HCT116 (cell line): ENCODE measurements at regions of chr2 and their contacts with region 1.

Region 1: GRCh38 chr2:208033758-208034502 is 8.6 kb upstream of the PLEKHM3 start:
- DNase-seq: peak; percentile 68
- ATAC-seq: peak; percentile 92
- H3K4me3 ChIP-seq: no peak overlapping the region
- H3K27ac ChIP-seq: no peak overlapping the region
- H3K4me1 ChIP-seq: peaks cover 0 to 7% of the 10 kb centered on the region in 2 experiments; a peak in 2 of 4 replicates
- H3K27me3 ChIP-seq: no peaks in the 10 kb centered on the region
- CTCF ChIP-seq: peak; percentile 40 to 75 (median 54); a peak in 5 of 6 replicates
- POLR2A ChIP-seq: no peak
- RAD21 ChIP-seq: peak; percentile 87

Region 2: GRCh38 chr2:207352978-207353671 is 680.8 kb before region 1 on chr2:
- CTCF ChIA-PET with region 1: no interaction called
- POLR2A ChIA-PET with region 1: no interaction called
- RAD21 ChIA-PET with region 1: no interaction called
- intact Hi-C with region 1: no loop called
- DNase-seq: no peak
- ATAC-seq: peak; percentile 74
- H3K4me3 ChIP-seq: no peak overlapping the region
- H3K27ac ChIP-seq: no peak overlapping the region
- H3K4me1 ChIP-seq: peaks cover 0 to 4% of the 10 kb centered on the region in 2 experiments; a peak in 1 of 4 replicates
- H3K27me3 ChIP-seq: no peaks in the 10 kb centered on the region
- CTCF ChIP-seq: 0 out of 6 replicates have a peak, but pooled peaks of 1 of the 3 experiments have one; percentile 5
- POLR2A ChIP-seq: no peak
- RAD21 ChIP-seq: peak; percentile 54

Region 3: DNA sequence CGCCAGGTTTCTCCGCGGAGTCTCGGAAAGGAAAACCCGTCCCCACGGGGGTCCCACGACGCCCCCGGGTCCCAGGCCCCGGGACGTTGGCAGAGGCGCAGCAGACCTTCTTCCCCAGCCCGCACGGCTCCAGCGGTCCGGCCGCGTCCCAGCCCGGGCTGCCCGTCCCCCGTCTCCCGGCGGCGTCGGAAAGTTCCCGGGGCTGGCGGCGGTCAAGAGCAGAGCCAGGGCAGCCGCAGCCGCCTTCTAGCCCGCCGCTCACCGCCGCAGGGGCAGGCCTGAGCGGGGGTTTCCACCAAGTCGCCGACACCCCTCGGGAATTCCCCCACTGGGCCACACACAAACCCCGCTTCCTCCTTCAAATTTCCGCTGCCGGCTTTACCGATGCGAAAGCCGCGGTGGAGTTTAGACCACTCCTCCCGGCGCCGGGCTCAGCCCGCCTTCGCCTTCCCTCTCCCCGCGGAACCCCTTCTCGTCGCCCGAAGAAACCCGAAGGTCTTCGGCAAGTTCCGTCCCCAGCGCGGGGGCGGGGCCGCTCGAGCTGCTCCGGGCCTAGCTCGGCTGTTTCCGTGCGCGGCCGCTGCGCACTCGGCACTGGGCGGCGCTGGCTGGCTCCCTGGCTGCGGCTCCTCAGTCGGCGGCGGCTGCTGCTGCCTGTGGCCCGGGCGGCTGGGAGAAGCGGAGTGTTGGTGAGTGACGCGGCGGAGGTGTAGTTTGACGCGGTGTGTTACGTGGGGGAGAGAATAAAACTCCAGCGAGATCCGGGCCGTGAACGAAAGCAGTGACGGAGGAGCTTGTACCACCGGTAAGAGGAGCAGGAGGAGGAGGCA is 504.4 kb before region 1 on chr2 and contains the start of gene CREB1:
- CTCF ChIA-PET with region 1: no interaction called
- POLR2A ChIA-PET with region 1: no interaction called
- RAD21 ChIA-PET with region 1: no interaction called
- intact Hi-C with region 1: loop called (anchors 10 kb)
- DNase-seq: peak; percentile 92
- ATAC-seq: peak; percentile 92
- H3K4me3 ChIP-seq: peak within 1 kb of the TSS; percentile 81 to 91
- H3K27ac ChIP-seq: peak within 1 kb of the TSS; percentile 91
- H3K4me1 ChIP-seq: peaks cover 5 to 27% of the 10 kb centered on the region in 2 experiments
- H3K27me3 ChIP-seq: no peaks in the 10 kb centered on the region
- CTCF ChIP-seq: no peak
- POLR2A ChIP-seq: peak; percentile 75
- RAD21 ChIP-seq: peak; percentile 12; the same call in 1 of the 2 replicates
- total RNA-seq, gene CREB1: 60.4 TPM

Region 4: GRCh38 chr2:207619764-207620203 is 414.1 kb before region 1 on chr2:
- CTCF ChIA-PET with region 1: no interaction called
- POLR2A ChIA-PET with region 1: no interaction called
- RAD21 ChIA-PET with region 1: no interaction called
- intact Hi-C with region 1: no loop called
- DNase-seq: no peak
- ATAC-seq: no peak
- H3K4me3 ChIP-seq: no peak overlapping the region
- H3K27ac ChIP-seq: no peak overlapping the region
- H3K4me1 ChIP-seq: peaks cover 32 to 53% of the 10 kb centered on the region in 2 experiments
- H3K27me3 ChIP-seq: no peaks in the 10 kb centered on the region
- CTCF ChIP-seq: no peak
- POLR2A ChIP-seq: no peak
- RAD21 ChIP-seq: no peak